Psoas muscle (tissue), 8 donors: ENCODE measurements at regions of chr16 and their contacts with region 1.

Region 1: GRCh38 chr16:61659936-61660335 is 376.3 kb downstream of the CDH8 start:
- DNase-seq: no peak
- ATAC-seq: no peak
- H3K4me3 ChIP-seq: no peak overlapping the region
- H3K27ac ChIP-seq: no peak overlapping the region
- H3K4me1 ChIP-seq: no peaks in the 10 kb centered on the region
- H3K27me3 ChIP-seq: no peaks in the 10 kb centered on the region
- CTCF ChIP-seq: no peak

Region 2: GRCh38 chr16:61555718-61556441 is 104.1 kb before region 1 on chr16:
- intact Hi-C with region 1: no loop called
- DNase-seq: peak in 1 of 2 donors; percentile 23
- ATAC-seq: no peak
- H3K4me3 ChIP-seq: no peak overlapping the region
- H3K27ac ChIP-seq: no peak overlapping the region
- H3K4me1 ChIP-seq: no peaks in the 10 kb centered on the region
- H3K27me3 ChIP-seq: no peaks in the 10 kb centered on the region
- CTCF ChIP-seq: no peak

Region 3: GRCh38 chr16:61569028-61569427 is 90.9 kb before region 1 on chr16:
- intact Hi-C with region 1: no loop called
- DNase-seq: no peak
- ATAC-seq: no peak
- H3K4me3 ChIP-seq: no peak overlapping the region
- H3K27ac ChIP-seq: no peak overlapping the region
- H3K4me1 ChIP-seq: no peaks in the 10 kb centered on the region
- H3K27me3 ChIP-seq: no peaks in the 10 kb centered on the region
- CTCF ChIP-seq: no peak

Region 4: DNA sequence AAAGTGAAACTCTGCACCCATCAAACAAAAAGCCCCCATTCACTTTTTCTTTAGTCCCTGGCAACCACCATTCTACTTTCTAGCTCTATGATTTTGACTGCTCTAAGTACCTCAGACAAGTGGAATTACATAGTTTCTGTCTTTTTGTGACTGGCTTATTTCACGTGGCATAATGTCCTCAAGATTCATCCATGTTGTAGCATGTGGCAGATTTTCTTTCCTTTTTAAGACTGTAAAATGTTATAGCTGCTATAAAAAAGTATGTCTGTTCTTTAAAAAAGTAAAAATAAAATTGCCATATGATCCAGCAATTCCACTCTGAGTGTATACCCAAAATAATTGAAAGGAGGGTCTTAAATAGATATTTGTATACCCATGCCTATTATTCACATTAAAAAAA is 53.4 kb before region 1 on chr16:
- intact Hi-C with region 1: loop called in 1 of 2 experiments (anchors 10 kb)
- DNase-seq: no peak
- ATAC-seq: no peak
- H3K4me3 ChIP-seq: no peak overlapping the region
- H3K27ac ChIP-seq: no peak overlapping the region
- H3K4me1 ChIP-seq: no peaks in the 10 kb centered on the region
- H3K27me3 ChIP-seq: no peaks in the 10 kb centered on the region
- CTCF ChIP-seq: no peak